CD8-positive, alpha-beta T cell (primary cell): ENCODE measurements at regions of chrX and their contacts with region 1.

Region 1: DNA sequence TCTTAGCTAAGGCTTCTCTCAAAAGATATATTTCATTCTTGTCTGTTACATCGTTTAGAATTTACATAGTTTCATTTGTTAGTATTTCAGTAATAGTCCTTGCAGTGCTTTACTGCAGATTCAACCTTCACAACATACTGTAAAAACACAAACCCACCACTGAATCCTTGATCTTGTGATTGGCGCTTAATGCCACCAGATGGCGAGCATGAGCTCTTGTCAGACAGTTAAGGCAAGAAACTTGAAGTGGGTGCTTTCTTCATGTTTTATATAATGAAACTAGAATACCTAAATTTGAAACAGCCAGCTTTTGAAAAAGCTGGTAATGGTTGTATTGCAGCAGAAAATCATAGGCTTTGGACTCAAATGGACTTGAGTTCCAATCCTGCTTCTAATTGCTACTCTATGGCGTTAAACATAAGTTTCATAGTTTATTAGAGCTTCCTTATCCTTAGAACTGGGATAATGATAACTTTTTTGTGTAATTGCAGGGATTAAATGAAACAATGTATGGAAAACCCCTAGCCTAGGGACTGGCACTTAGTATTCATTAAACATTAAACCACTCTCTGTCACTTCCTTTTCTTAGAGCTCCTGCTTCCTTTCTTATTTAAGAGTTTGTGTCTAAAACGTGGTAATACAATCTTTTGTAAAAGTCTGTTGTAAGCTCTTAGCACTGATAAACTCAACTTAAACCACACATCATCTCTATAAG is 95.1 kb downstream of the USP9X start:
- DNase-seq: peak; percentile 2 to 73 (median 45)
- ATAC-seq: peak; percentile 73
- H3K4me3 ChIP-seq: no peak overlapping the region
- H3K4me3 Mint-ChIP-seq: no peak overlapping the region
- H3K27ac ChIP-seq: no peak overlapping the region
- H3K27ac Mint-ChIP-seq: peak overlapping the region; percentile 58
- H3K4me1 ChIP-seq: peaks cover 8% of the 10 kb centered on the region
- H3K4me1 Mint-ChIP-seq: peaks cover 52% of the 10 kb centered on the region
- H3K27me3 ChIP-seq: no peaks in the 10 kb centered on the region
- H3K27me3 Mint-ChIP-seq: no peaks in the 10 kb centered on the region
- CTCF ChIP-seq: peak; percentile 50

Region 2: GRCh38 chrX:40127052-40127451 is 1053.3 kb before region 1 on chrX:
- CTCF ChIA-PET with region 1: no interaction called
- POLR2A ChIA-PET with region 1: no interaction called
- intact Hi-C with region 1: no loop called
- DNase-seq: peak in 2 of 9 experiments; percentile 25 to 49
- ATAC-seq: peak; percentile 76
- H3K4me3 ChIP-seq: no peak overlapping the region
- H3K4me3 Mint-ChIP-seq: no peak overlapping the region
- H3K27ac ChIP-seq: no peak overlapping the region
- H3K27ac Mint-ChIP-seq: no peak overlapping the region
- H3K4me1 ChIP-seq: peaks cover 8% of the 10 kb centered on the region
- H3K4me1 Mint-ChIP-seq: peaks cover 6% of the 10 kb centered on the region
- H3K27me3 ChIP-seq: no peaks in the 10 kb centered on the region
- H3K27me3 Mint-ChIP-seq: no peaks in the 10 kb centered on the region
- CTCF ChIP-seq: no peak

Region 3: GRCh38 chrX:41127477-41128192 is 52.7 kb before region 1 on chrX:
- CTCF ChIA-PET with region 1: no interaction called
- POLR2A ChIA-PET with region 1: no interaction called
- intact Hi-C with region 1: no loop called
- DNase-seq: no peak
- ATAC-seq: no peak
- H3K4me3 ChIP-seq: no peak overlapping the region
- H3K4me3 Mint-ChIP-seq: no peak overlapping the region
- H3K27ac ChIP-seq: no peak overlapping the region
- H3K27ac Mint-ChIP-seq: no peak overlapping the region
- H3K4me1 ChIP-seq: peaks cover 5% of the 10 kb centered on the region
- H3K4me1 Mint-ChIP-seq: peaks cover 39% of the 10 kb centered on the region
- H3K27me3 ChIP-seq: no peaks in the 10 kb centered on the region
- H3K27me3 Mint-ChIP-seq: no peaks in the 10 kb centered on the region
- CTCF ChIP-seq: no peak

Region 4: GRCh38 chrX:41167888-41168287 is 12.5 kb before region 1 on chrX:
- CTCF ChIA-PET with region 1: interaction called, 10 read pairs
- POLR2A ChIA-PET with region 1: no interaction called
- intact Hi-C with region 1: no loop called
- DNase-seq: no peak
- ATAC-seq: no peak
- H3K4me3 ChIP-seq: no peak overlapping the region
- H3K4me3 Mint-ChIP-seq: no peak overlapping the region
- H3K27ac ChIP-seq: no peak overlapping the region
- H3K27ac Mint-ChIP-seq: no peak overlapping the region
- H3K4me1 ChIP-seq: no peaks in the 10 kb centered on the region
- H3K4me1 Mint-ChIP-seq: peaks cover 3% of the 10 kb centered on the region
- H3K27me3 ChIP-seq: no peaks in the 10 kb centered on the region
- H3K27me3 Mint-ChIP-seq: no peaks in the 10 kb centered on the region
- CTCF ChIP-seq: no peak

Region 5: GRCh38 chrX:41259516-41259915 is 79.2 kb after region 1 on chrX:
- CTCF ChIA-PET with region 1: interaction called, 21 read pairs
- POLR2A ChIA-PET with region 1: no interaction called
- intact Hi-C with region 1: no loop called
- DNase-seq: no peak
- ATAC-seq: no peak
- H3K4me3 ChIP-seq: no peak overlapping the region
- H3K4me3 Mint-ChIP-seq: no peak overlapping the region
- H3K27ac ChIP-seq: no peak overlapping the region
- H3K27ac Mint-ChIP-seq: no peak overlapping the region
- H3K4me1 ChIP-seq: no peaks in the 10 kb centered on the region
- H3K4me1 Mint-ChIP-seq: no peaks in the 10 kb centered on the region
- H3K27me3 ChIP-seq: no peaks in the 10 kb centered on the region
- H3K27me3 Mint-ChIP-seq: no peaks in the 10 kb centered on the region
- CTCF ChIP-seq: no peak

Region 6: GRCh38 chrX:41350976-41351569 is 170.7 kb after region 1 on chrX:
- CTCF ChIA-PET with region 1: no interaction called
- POLR2A ChIA-PET with region 1: no interaction called
- intact Hi-C with region 1: loop called in 1 of 2 experiments (anchors 10 kb)
- DNase-seq: peak in 1 of 9 experiments; percentile 18
- ATAC-seq: peak; percentile 16
- H3K4me3 ChIP-seq: no peak overlapping the region
- H3K4me3 Mint-ChIP-seq: no peak overlapping the region
- H3K27ac ChIP-seq: no peak overlapping the region
- H3K27ac Mint-ChIP-seq: peak overlapping the region; percentile 49
- H3K4me1 ChIP-seq: peaks cover 6% of the 10 kb centered on the region
- H3K4me1 Mint-ChIP-seq: peaks cover 20% of the 10 kb centered on the region
- H3K27me3 ChIP-seq: no peaks in the 10 kb centered on the region
- H3K27me3 Mint-ChIP-seq: no peaks in the 10 kb centered on the region
- CTCF ChIP-seq: no peak

Region 7: GRCh38 chrX:41441934-41442823 is 261.8 kb after region 1 on chrX:
- CTCF ChIA-PET with region 1: no interaction called
- POLR2A ChIA-PET with region 1: no interaction called
- intact Hi-C with region 1: loop called (anchors 2 to 5 kb)
- DNase-seq: peak; percentile 73 to 91 (median 81)
- ATAC-seq: peak; percentile 97
- H3K4me3 ChIP-seq: peak overlapping the region; percentile 49 to 51
- H3K4me3 Mint-ChIP-seq: peak overlapping the region; percentile 61
- H3K27ac ChIP-seq: no peak overlapping the region
- H3K27ac Mint-ChIP-seq: peak overlapping the region; percentile 60
- H3K4me1 ChIP-seq: peaks cover 6% of the 10 kb centered on the region
- H3K4me1 Mint-ChIP-seq: peaks cover 5% of the 10 kb centered on the region
- H3K27me3 ChIP-seq: no peaks in the 10 kb centered on the region
- H3K27me3 Mint-ChIP-seq: no peaks in the 10 kb centered on the region
- CTCF ChIP-seq: peak; percentile 59